Caco-2 (cell line): ENCODE measurements at regions of chr14 and their contacts with region 1.

Region 1: GRCh38 chr14:102694530-102695166 is 82.6 kb upstream of the TRAF3 start:
- DNase-seq: peak; percentile 45 to 71
- H3K4me3 ChIP-seq: no peak overlapping the region
- H3K4me3 Mint-ChIP-seq: no peak overlapping the region
- H3K27ac Mint-ChIP-seq: no peak overlapping the region
- H3K4me1 ChIP-seq: peaks cover 51% of the 10 kb centered on the region
- H3K4me1 Mint-ChIP-seq: peaks cover 39% of the 10 kb centered on the region
- H3K27me3 ChIP-seq: no peaks in the 10 kb centered on the region
- H3K27me3 Mint-ChIP-seq: no peaks in the 10 kb centered on the region
- CTCF ChIP-seq: peak; percentile 55 to 56

Region 2: DNA sequence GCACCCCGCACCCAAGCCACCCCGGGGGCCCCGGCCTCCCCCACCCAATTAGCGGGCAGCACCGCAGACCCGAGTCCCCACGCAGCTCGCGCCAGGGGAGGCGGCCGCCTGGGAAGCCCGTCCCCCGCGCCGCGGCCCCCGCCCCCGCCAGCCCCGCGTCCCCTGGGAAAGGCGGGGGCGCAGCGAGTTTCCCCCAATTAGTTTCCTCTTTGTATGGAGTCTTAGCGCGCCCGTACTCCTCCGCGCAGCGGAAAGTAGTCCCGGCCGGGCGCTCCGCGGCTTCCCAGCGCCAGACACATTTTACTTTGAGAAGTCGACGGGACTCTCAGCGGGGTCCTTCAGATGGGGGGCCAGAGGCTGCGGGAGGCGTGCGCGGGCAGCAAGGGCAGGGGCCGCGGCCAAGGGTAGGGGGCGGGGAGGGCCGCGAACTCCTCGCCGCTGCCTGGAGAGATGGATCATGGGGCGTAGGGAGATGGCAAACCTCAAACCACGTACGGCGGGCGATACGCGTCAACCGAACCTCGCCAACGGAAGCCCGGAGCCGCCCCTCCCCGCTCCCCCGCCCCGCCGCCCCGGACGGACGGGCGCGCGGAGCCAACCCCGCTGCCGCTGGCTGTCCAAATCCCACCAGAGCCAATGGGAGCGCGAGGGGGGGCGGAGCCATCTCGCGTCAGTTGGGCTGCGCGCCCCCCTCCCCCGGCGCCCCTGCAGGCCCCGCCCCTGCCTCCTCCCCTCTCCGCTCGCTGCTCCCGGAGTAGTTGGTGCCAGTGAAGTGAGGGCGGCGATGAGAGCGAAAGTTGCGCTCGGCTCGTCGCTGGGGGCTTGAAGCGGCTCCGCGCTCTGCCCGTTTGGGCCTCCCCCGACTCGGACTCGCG is 102.5 kb before region 1 on chr14 and contains the start of gene RCOR1:
- CTCF ChIA-PET with region 1: interaction called, 3 read pairs
- POLR2A ChIA-PET with region 1: no interaction called
- intact Hi-C with region 1: loop called (anchors 5 kb)
- DNase-seq: peak; percentile 97 to 98
- H3K4me3 ChIP-seq: peak within 1 kb of the TSS; percentile 99
- H3K4me3 Mint-ChIP-seq: peak within 1 kb of the TSS; percentile 79
- H3K27ac Mint-ChIP-seq: peak within 1 kb of the TSS; percentile 82
- H3K4me1 ChIP-seq: peaks cover 29% of the 10 kb centered on the region
- H3K4me1 Mint-ChIP-seq: peaks cover 18% of the 10 kb centered on the region
- H3K27me3 ChIP-seq: no peaks in the 10 kb centered on the region
- H3K27me3 Mint-ChIP-seq: no peaks in the 10 kb centered on the region
- CTCF ChIP-seq: no peak
- total RNA-seq, gene RCOR1: 31.0 and 33.6 TPM in 2 replicates

Region 3: DNA sequence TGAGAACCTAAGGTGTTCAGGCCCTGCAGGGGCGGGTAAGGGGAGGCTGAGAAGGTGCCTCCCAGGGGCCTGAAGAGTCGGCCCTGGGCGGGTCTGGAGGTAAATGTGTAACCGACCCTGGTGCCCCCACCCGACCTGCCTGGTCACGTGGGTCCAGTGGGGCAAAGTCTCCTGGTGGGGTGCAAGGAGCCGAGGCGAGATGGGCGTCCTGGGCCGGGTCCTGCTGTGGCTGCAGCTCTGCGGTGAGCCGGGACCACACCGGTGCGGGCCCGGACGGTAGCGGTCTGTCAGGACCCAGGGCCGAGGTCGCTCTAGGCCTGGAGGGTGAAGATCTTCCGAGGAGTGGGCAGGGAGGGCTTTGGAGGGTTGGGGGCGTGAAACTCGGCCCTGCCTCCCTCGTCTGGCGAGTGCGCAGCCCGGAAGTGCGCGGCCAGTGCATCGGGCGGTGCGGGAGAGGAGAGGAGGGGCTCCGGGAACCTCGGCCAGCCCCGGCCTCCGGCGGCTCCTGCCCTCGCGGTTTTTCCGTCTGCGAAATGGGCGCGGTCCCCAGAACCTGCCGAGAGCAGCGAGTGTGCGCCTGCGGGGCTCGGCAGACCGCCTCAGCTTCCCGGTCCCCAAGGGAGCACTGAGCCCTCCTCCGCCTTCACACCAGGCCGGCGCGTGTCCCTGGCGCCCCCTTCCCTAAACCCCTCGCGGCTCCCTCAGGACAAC is 228.0 kb after region 1 on chr14 and contains the start of gene AMN:
- CTCF ChIA-PET with region 1: interaction called, 6 read pairs
- POLR2A ChIA-PET with region 1: no interaction called
- intact Hi-C with region 1: loop called (anchors 2 kb)
- DNase-seq: peak; percentile 88 to 91
- H3K4me3 ChIP-seq: peak within 1 kb of the TSS; percentile 94
- H3K4me3 Mint-ChIP-seq: no peak within 1 kb of the TSS
- H3K27ac Mint-ChIP-seq: no peak within 1 kb of the TSS
- H3K4me1 ChIP-seq: peaks cover 25% of the 10 kb centered on the region
- H3K4me1 Mint-ChIP-seq: no peaks in the 10 kb centered on the region
- H3K27me3 ChIP-seq: no peaks in the 10 kb centered on the region
- H3K27me3 Mint-ChIP-seq: no peaks in the 10 kb centered on the region
- CTCF ChIP-seq: no peak
- total RNA-seq, gene AMN: 70.7 TPM in 2 replicates